ENCODE measurements at regions of chr14 and their contacts with region 1.

Region 1: DNA sequence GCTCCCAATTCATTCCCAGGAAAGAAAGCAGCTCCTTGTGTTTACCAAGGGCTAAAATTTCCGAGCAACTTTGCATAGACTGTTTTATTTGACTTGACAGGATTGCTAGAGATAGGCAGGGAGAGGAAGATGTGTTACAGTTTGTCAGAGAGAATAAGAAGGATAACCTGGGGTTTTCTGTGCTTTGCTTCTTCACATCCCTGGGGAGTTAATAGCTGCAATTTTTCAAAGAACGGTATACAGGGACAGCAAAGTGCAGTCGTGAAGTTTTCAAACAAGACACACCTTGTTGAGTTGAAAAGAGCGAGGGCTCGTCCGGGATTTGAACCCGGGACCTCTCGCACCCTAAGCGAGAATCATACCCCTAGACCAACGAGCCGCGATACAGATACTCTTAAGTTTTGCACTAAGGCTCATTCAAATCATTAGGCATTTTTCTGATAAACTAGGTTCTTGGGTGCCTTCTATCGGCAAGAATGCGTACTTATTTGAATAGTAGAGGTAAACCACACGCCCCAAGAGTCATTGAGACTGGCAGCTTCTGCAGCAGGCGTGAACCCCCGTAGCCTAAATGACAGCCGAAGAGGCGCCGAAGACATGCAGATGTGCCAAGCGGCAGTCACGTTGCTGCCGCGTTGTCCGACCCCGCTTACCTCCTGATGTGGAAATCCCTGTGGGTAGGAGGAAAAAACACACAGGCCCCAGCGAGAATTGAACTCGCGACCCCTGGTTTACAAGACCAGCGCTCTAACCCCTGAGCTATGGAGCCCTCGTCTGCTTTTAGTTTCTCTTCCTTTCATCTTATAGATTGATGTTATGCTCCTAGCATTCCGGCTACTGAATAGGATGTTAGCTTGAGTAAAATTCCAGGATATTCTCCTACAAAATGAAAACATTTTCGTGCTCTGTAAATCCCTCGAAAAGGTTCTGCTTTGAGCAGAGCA is 22.2 kb upstream of the RNASE12 start:
- DNase-seq: peak; percentile 78 to 94
- ATAC-seq: peak; percentile 82 to 88 (median 84)
- H3K4me3 ChIP-seq: peak overlapping the region; percentile 42
- H3K4me3 Mint-ChIP-seq: no peak overlapping the region
- H3K27ac ChIP-seq: peak overlapping the region; percentile 41
- H3K27ac Mint-ChIP-seq: no peak overlapping the region
- H3K4me1 ChIP-seq: peaks cover 24% of the 10 kb centered on the region
- H3K4me1 Mint-ChIP-seq: peaks cover 14 to 24% of the 10 kb centered on the region in 2 donors
- H3K27me3 ChIP-seq: no peaks in the 10 kb centered on the region
- H3K27me3 Mint-ChIP-seq: no peaks in the 10 kb centered on the region
- CTCF ChIP-seq: peak; percentile 47

Region 2: GRCh38 chr14:20327005-20327869 is 286.1 kb before region 1 on chr14:
- intact Hi-C with region 1: loop called (anchors 1 kb)
- DNase-seq: peak in 1 of 2 donors; percentile 85
- ATAC-seq: peak in 2 of 3 donors; percentile 70 to 75
- H3K4me3 ChIP-seq: no peak overlapping the region
- H3K4me3 Mint-ChIP-seq: no peak overlapping the region
- H3K27ac ChIP-seq: no peak overlapping the region
- H3K27ac Mint-ChIP-seq: peak overlapping the region in 1 of 2 donors; percentile 55
- H3K4me1 ChIP-seq: peaks cover under 1% of the 10 kb centered on the region
- H3K4me1 Mint-ChIP-seq: peaks cover 12 to 14% of the 10 kb centered on the region in 2 donors
- H3K27me3 ChIP-seq: no peaks in the 10 kb centered on the region
- H3K27me3 Mint-ChIP-seq: no peaks in the 10 kb centered on the region
- CTCF ChIP-seq: peak; percentile 81

Region 3: DNA sequence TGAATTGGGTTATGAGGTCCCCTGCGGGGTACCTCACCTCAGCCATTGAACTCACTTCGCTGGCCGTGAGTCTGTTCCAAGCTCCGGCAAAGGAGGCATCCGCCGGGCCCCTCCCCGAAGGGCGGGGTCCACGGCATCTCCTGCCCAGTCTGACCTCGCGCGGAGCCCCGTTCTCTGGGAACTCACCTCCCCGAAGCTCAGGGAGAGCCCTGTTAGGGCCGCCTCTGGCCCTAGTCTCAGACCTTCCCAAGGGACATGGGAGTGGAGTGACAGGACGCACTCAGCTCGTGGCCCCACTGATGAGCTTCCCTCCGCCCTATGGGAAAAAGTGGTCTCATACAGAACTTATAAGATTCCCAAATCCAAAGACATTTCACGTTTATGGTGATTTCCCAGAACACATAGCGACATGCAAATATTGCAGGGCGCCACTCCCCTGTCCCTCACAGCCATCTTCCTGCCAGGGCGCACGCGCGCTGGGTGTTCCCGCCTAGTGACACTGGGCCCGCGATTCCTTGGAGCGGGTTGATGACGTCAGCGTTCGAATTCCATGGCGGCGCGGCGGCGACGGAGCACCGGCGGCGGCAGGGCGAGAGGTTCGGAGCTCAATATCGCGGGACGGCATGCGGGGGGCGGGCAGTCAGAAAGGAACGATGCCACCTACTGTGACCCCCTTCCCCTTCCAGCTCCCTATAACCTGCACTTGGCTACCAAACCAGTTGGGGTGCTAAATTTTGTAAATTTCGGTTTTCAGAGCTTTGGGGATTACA is 270.1 kb before region 1 on chr14 and contains the start of gene PARP2:
- intact Hi-C with region 1: loop called (anchors 5 kb)
- DNase-seq: peak; percentile 83 to 97
- ATAC-seq: peak; percentile 80 to 90 (median 82)
- H3K4me3 ChIP-seq: peak within 1 kb of the TSS; percentile 94
- H3K4me3 Mint-ChIP-seq: peak within 1 kb of the TSS; percentile 96
- H3K27ac ChIP-seq: peak within 1 kb of the TSS; percentile 90
- H3K27ac Mint-ChIP-seq: peak within 1 kb of the TSS; percentile 97 to 99
- H3K4me1 ChIP-seq: peaks cover 6% of the 10 kb centered on the region
- H3K4me1 Mint-ChIP-seq: peaks cover 14 to 22% of the 10 kb centered on the region in 2 donors
- H3K27me3 ChIP-seq: no peaks in the 10 kb centered on the region
- H3K27me3 Mint-ChIP-seq: no peaks in the 10 kb centered on the region
- CTCF ChIP-seq: no peak
- total RNA-seq, gene PARP2: 18.2 to 28.3 (median 22.2) TPM

Region 4: DNA sequence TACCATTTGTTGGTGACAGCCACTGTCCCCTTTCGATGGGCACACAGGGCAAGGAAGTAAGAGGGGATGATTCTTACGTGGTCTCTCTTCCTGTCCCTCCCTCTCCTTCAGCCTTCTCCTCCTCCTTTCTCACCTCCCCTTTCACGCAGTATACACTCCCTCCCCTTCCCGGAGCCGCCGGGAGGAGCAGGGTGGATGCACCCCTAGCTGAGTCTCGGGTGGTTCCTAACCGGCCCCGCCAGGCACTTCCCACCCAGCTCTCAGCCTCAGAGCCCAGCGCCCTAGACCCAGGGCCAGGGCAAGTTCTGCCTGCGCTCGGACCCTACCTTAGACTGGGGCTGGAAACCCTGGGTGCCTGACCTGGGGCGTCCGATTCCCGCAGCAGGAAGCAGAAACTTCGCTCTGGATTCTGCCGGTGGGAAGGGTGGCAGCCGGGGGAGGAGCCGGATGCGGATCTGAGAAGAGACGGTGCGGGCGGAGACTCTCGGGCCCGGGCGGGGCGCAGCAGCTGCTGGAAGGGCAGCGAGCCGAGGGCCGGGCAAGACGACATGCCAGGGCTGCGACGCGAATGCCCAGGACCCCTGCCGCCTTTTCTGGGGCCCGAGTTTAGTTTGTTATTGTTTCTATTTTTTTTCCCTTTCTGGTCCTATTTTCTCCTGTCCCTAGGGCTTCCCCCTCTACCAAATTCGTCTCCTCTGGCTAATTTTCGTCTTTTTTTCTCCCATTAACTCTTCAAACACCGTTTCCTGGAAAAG is 200.1 kb before region 1 on chr14 and contains the start of gene TEP1:
- intact Hi-C with region 1: loop called (anchors 1 kb)
- DNase-seq: peak; percentile 64 to 82
- ATAC-seq: peak; percentile 73 to 82 (median 76)
- H3K4me3 ChIP-seq: peak within 1 kb of the TSS; percentile 97
- H3K4me3 Mint-ChIP-seq: peak within 1 kb of the TSS; percentile 98
- H3K27ac ChIP-seq: peak within 1 kb of the TSS; percentile 94
- H3K27ac Mint-ChIP-seq: peak within 1 kb of the TSS; percentile 91 to 96
- H3K4me1 ChIP-seq: peaks cover 9% of the 10 kb centered on the region
- H3K4me1 Mint-ChIP-seq: peaks cover 35 to 53% of the 10 kb centered on the region in 2 donors
- H3K27me3 ChIP-seq: no peaks in the 10 kb centered on the region
- H3K27me3 Mint-ChIP-seq: no peaks in the 10 kb centered on the region
- CTCF ChIP-seq: no peak
- total RNA-seq, gene TEP1: 76.3 to 83.2 (median 80.8) TPM

Region 5: GRCh38 chr14:20454516-20455354 is 158.6 kb before region 1 on chr14 and contains the starts of genes APEX1 and OSGEP:
- intact Hi-C with region 1: loop called (anchors 1 kb)
- DNase-seq: peak; percentile 94 to 100
- ATAC-seq: peak; percentile 87 to 92 (median 88)
- H3K4me3 ChIP-seq: peak within 1 kb of the TSS; percentile 79
- H3K4me3 Mint-ChIP-seq: no peak within 1 kb of the TSS
- H3K27ac ChIP-seq: peak within 1 kb of the TSS; percentile 89
- H3K27ac Mint-ChIP-seq: no peak within 1 kb of the TSS
- H3K4me1 ChIP-seq: peaks cover 27% of the 10 kb centered on the region
- H3K4me1 Mint-ChIP-seq: peaks cover 2 to 23% of the 10 kb centered on the region in 2 donors
- H3K27me3 ChIP-seq: no peaks in the 10 kb centered on the region
- H3K27me3 Mint-ChIP-seq: no peaks in the 10 kb centered on the region
- CTCF ChIP-seq: no peak
- total RNA-seq, gene APEX1: 66.0 to 77.6 (median 74.9) TPM
- total RNA-seq, gene OSGEP: 60.1 to 65.4 (median 63.3) TPM

Region 6: DNA sequence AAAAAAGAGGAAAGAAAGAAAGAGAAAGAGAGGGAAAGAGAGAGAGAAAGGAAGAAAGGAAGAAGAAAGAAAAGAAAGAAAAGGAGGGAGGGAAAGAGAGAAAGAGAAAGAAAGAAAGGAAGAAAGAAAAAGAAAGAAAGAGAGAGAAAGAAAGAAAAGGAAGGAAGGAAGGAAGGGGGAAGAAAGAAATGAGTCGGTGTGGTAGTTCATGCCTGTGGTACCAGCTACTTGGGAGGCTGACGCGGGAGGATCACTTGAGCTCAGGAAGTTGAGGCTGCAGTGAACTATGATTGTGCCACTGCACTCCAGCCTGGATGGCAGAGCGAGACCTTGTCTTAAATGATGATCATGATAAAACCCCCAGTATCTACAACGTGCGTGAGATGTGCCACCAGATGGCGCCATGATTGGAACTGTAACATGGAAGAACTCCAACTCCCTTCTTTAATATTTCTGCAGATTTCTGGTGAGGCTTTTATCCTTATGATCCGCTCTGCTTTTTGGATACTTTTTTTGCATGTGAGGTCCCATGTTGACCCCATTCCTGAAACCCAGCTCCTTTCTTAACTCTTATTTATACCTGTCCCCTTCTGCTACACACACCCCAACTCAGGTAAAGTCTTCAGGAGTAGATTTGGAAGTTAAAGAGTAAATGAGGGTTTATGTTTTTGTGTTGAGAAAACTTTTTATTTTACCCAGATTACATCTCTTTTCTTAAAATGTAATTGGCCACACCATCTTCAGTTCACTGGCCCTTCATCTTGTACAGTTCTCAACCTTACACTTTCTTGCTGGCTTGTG is 82.4 kb before region 1 on chr14:
- intact Hi-C with region 1: loop called (anchors 1 kb)
- DNase-seq: peak; percentile 61 to 87
- ATAC-seq: peak; percentile 76 to 87 (median 82)
- H3K4me3 ChIP-seq: no peak overlapping the region
- H3K4me3 Mint-ChIP-seq: no peak overlapping the region
- H3K27ac ChIP-seq: no peak overlapping the region
- H3K27ac Mint-ChIP-seq: no peak overlapping the region
- H3K4me1 ChIP-seq: peaks cover 3% of the 10 kb centered on the region
- H3K4me1 Mint-ChIP-seq: peaks cover 9% of the 10 kb centered on the region in 2 donors
- H3K27me3 ChIP-seq: peaks cover 3% of the 10 kb centered on the region
- H3K27me3 Mint-ChIP-seq: peaks cover 10 to 26% of the 10 kb centered on the region in 2 donors
- CTCF ChIP-seq: peak; percentile 79

Region 7: DNA sequence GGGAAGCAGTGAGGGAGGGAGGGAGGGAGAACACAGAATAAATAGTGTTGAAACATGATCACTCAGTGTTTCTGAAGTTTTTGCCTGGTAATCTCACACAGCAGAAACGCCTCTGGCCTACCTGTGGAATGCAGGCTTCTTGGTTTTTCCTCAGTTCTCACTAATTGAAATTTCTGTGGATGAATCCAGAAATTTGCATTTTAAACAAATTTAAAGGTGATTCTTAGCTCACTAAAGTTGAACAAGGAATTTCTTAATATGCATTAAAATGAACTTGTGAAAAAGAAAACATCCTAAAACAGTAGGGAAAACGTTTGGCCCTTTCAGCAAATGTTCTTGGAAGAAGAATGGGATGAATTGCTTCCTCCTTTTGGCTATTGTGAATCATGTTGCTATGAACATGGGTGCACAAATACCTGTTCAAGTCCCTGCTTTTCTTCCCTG is 53.9 kb before region 1 on chr14:
- intact Hi-C with region 1: no loop called
- DNase-seq: no peak
- ATAC-seq: no peak
- H3K4me3 ChIP-seq: no peak overlapping the region
- H3K4me3 Mint-ChIP-seq: no peak overlapping the region
- H3K27ac ChIP-seq: no peak overlapping the region
- H3K27ac Mint-ChIP-seq: no peak overlapping the region
- H3K4me1 ChIP-seq: no peaks in the 10 kb centered on the region
- H3K4me1 Mint-ChIP-seq: no peaks in the 10 kb centered on the region
- H3K27me3 ChIP-seq: no peaks in the 10 kb centered on the region
- H3K27me3 Mint-ChIP-seq: peaks cover 5 to 7% of the 10 kb centered on the region in 2 donors
- CTCF ChIP-seq: no peak

Region 8: DNA sequence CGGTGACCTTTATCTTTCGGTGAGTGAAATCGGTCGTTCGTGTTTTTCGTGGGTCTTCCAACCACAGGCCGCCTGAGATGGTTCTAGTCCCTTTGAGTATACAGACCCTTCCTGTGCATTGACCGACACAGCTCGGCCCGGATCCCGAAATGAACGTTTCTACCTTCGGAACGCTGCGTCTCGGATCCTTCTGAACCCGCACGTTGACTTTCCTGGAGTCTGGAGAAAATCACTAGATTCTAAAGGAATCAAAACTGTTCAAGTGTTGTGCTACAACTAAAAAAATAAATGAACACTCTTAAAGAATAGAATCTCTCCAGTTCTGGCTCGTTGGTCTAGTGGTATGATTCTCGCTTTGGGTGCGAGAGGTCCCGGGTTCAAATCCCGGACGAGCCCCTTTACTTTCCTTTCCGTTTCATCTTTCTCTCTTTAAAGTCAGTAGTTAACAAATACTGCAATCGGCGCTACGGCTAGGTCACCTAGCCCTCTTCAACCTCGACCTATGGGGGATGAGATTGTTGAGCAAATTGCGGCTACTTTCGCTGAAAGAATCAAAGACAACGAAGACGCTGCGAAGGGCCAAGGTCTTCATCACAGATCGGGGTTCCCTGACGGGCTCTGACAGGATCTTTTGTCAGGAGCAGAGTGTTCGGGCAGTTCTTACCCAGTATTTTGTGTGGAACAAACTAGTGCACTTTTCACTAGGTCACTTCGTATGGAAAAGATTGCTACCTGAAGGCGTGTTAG is 19.5 kb after region 1 on chr14:
- intact Hi-C with region 1: loop called (anchors 2 kb)
- DNase-seq: peak in 1 of 2 donors; percentile 82
- ATAC-seq: peak; percentile 64 to 74 (median 66)
- H3K4me3 ChIP-seq: peak overlapping the region; percentile 44
- H3K4me3 Mint-ChIP-seq: peak overlapping the region; percentile 87
- H3K27ac ChIP-seq: no peak overlapping the region
- H3K27ac Mint-ChIP-seq: peak overlapping the region; percentile 84 to 93
- H3K4me1 ChIP-seq: peaks cover 32% of the 10 kb centered on the region
- H3K4me1 Mint-ChIP-seq: peaks cover 42 to 49% of the 10 kb centered on the region in 2 donors
- H3K27me3 ChIP-seq: peaks cover 9% of the 10 kb centered on the region
- H3K27me3 Mint-ChIP-seq: peaks cover 37 to 60% of the 10 kb centered on the region in 2 donors
- CTCF ChIP-seq: no peak

Measured in natural killer cell (primary cell).